ENCODE measurements at regions of chr13 and their contacts with region 1.

Region 1: GRCh38 chr13:28671126-28671792 is 12.3 kb downstream of the POMP start:
- DNase-seq: no peak
- H3K4me3 ChIP-seq: no peak overlapping the region
- H3K27ac ChIP-seq: no peak overlapping the region
- H3K4me1 ChIP-seq: no peaks in the 10 kb centered on the region
- H3K27me3 ChIP-seq: no peaks in the 10 kb centered on the region

Region 2: GRCh38 chr13:28778308-28779215 is 107.3 kb after region 1 on chr13:
- in situ Hi-C with region 1: no loop called
- DNase-seq: no peak
- H3K4me3 ChIP-seq: no peak overlapping the region
- H3K27ac ChIP-seq: no peak overlapping the region
- H3K4me1 ChIP-seq: no peaks in the 10 kb centered on the region
- H3K27me3 ChIP-seq: 0 out of 2 replicates have a peak, but pooled peaks cover 5% of the 10 kb centered on the region

Region 3: GRCh38 chr13:28792992-28793391 is 121.7 kb after region 1 on chr13:
- in situ Hi-C with region 1: loop called (anchors 5 kb)
- DNase-seq: peak; percentile 94
- H3K4me3 ChIP-seq: no peak overlapping the region
- H3K27ac ChIP-seq: no peak overlapping the region
- H3K4me1 ChIP-seq: peaks cover 8% of the 10 kb centered on the region
- H3K27me3 ChIP-seq: peaks cover 14% of the 10 kb centered on the region

Measured in GM23248 (cell line).